CD4-positive, alpha-beta T cell (primary cell): ENCODE measurements at regions of chr2 and their contacts with region 1.

Region 1: GRCh38 chr2:10448208-10448645 is at the start of gene ODC1:
- DNase-seq: peak; percentile 96 to 99 (median 98)
- ATAC-seq: peak; percentile 81
- H3K4me3 ChIP-seq: peak within 1 kb of the TSS; percentile 63
- H3K4me3 Mint-ChIP-seq: peak within 1 kb of the TSS; percentile 86
- H3K27ac ChIP-seq: peak within 1 kb of the TSS; percentile 84 to 86
- H3K27ac Mint-ChIP-seq: peak within 1 kb of the TSS; percentile 87
- H3K4me1 ChIP-seq: peaks cover 47% of the 10 kb centered on the region
- H3K4me1 Mint-ChIP-seq: peaks cover 47% of the 10 kb centered on the region
- H3K27me3 ChIP-seq: no peaks in the 10 kb centered on the region
- H3K27me3 Mint-ChIP-seq: no peaks in the 10 kb centered on the region
- CTCF ChIP-seq: no peak
- total RNA-seq, gene ODC1: 162 to 164 TPM

Region 2: DNA sequence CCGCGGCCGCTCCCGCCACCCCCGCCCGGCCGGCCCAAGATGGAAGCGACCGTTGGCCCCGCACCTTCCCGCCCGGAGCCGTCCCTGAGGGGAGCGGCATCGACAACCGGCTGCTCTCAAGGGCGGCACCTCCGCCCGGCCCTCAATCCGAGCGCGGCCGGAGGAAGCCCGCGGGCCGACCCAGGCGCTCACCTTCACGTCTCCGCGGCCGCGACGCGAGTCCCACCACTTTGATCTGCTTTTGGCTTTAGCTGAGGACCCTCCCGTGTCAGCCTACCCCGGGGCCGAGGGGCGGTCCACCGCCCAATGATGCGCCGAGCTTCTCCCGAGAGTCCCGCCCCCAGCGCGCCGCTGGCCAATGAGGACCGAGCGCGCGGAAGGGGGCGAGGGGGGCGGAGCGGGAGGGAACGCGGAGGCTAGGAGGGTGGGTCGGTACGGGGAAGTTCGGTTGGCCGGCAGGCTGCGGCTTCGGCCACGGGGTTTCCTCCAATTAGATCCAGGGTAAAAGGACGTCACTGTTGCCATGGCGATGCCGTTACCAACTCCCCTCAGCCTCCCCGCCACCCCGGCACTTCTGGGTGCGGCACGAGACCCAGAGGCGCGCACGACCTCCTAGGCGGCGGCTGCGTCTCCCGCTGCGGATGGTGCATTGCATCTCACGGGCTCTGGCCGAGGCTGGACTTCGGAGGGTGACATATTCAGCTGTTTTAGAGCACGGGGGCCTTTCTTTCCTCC is 817.3 kb before region 1 on chr2 and contains the start of gene YWHAQ:
- CTCF ChIA-PET with region 1: no interaction called
- POLR2A ChIA-PET with region 1: no interaction called
- intact Hi-C with region 1: loop called in 1 of 2 experiments (anchors 5 kb)
- DNase-seq: peak; percentile 93 to 99 (median 96)
- ATAC-seq: peak; percentile 85
- H3K4me3 ChIP-seq: peak within 1 kb of the TSS; percentile 93
- H3K4me3 Mint-ChIP-seq: peak within 1 kb of the TSS; percentile 98
- H3K27ac ChIP-seq: peak within 1 kb of the TSS; percentile 77 to 81
- H3K27ac Mint-ChIP-seq: peak within 1 kb of the TSS; percentile 96
- H3K4me1 ChIP-seq: peaks cover 42% of the 10 kb centered on the region
- H3K4me1 Mint-ChIP-seq: peaks cover 56% of the 10 kb centered on the region
- H3K27me3 ChIP-seq: no peaks in the 10 kb centered on the region
- H3K27me3 Mint-ChIP-seq: no peaks in the 10 kb centered on the region
- CTCF ChIP-seq: no peak
- total RNA-seq, gene YWHAQ: 95.8 to 101 TPM

Region 3: GRCh38 chr2:9951272-9951972 is 496.8 kb before region 1 on chr2 and contains the start of gene GRHL1:
- CTCF ChIA-PET with region 1: no interaction called
- POLR2A ChIA-PET with region 1: no interaction called
- intact Hi-C with region 1: loop called in 1 of 2 experiments (anchors 10 kb)
- DNase-seq: peak; percentile 78 to 98 (median 88)
- ATAC-seq: peak; percentile 95
- H3K4me3 ChIP-seq: peak within 1 kb of the TSS; percentile 52
- H3K4me3 Mint-ChIP-seq: peak within 1 kb of the TSS; percentile 94
- H3K27ac ChIP-seq: no peak within 1 kb of the TSS
- H3K27ac Mint-ChIP-seq: peak within 1 kb of the TSS; percentile 39
- H3K4me1 ChIP-seq: peaks cover 10% of the 10 kb centered on the region
- H3K4me1 Mint-ChIP-seq: peaks cover 4% of the 10 kb centered on the region
- H3K27me3 ChIP-seq: peaks cover 11 to 21% of the 10 kb centered on the region in 2 experiments
- H3K27me3 Mint-ChIP-seq: peaks cover 56% of the 10 kb centered on the region
- CTCF ChIP-seq: no peak
- total RNA-seq, gene GRHL1: 0.28 to 0.38 TPM

Region 4: GRCh38 chr2:10019174-10019573 is 429.1 kb before region 1 on chr2:
- CTCF ChIA-PET with region 1: no interaction called
- POLR2A ChIA-PET with region 1: no interaction called
- intact Hi-C with region 1: no loop called
- DNase-seq: no peak
- ATAC-seq: no peak
- H3K4me3 ChIP-seq: no peak overlapping the region
- H3K4me3 Mint-ChIP-seq: no peak overlapping the region
- H3K27ac ChIP-seq: no peak overlapping the region
- H3K27ac Mint-ChIP-seq: no peak overlapping the region
- H3K4me1 ChIP-seq: no peaks in the 10 kb centered on the region
- H3K4me1 Mint-ChIP-seq: no peaks in the 10 kb centered on the region
- H3K27me3 ChIP-seq: no peaks in the 10 kb centered on the region
- H3K27me3 Mint-ChIP-seq: peaks cover 13% of the 10 kb centered on the region
- CTCF ChIP-seq: no peak

Region 5: DNA sequence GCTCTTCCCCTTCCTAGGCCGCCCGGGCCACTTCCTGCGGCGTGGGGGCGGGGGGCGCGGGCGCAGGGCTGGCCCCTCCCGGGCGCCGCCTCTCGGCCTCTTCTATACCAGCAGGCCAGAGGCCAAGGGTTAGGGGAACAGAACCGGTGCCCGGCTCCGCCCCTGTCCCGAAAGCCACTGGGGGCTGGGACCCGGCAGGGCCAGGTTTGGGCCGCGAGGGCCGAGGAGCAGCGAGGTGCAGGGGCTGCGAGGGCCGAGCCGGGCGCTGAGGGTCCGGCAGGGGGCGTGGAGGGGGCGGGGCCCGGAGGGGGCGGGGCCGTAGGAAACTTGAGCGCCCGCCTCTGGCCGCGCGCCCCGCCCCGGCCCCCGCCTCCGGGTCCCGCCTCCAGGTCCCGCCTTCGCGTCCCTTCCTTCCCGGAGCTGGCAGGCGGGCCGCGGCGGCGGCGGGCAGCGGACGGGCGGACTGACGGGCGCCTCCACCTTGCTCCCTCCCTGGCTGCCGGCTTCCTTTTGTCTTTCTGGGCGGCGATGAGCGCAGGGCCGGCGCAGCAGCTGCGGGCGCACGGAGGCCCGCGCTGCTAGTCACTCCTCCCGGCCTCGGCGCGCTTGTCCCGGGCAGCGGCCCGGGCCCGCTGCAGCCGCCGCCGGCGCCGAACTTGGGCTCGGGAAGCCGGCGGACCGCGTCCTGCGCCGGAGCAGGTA is 145.6 kb before region 1 on chr2 and contains the start of gene HPCAL1:
- CTCF ChIA-PET with region 1: no interaction called
- POLR2A ChIA-PET with region 1: interaction called, 47 read pairs
- intact Hi-C with region 1: loop called in 1 of 2 experiments (anchors 2 kb)
- DNase-seq: peak; percentile 60 to 91 (median 80)
- ATAC-seq: peak; percentile 62
- H3K4me3 ChIP-seq: peak within 1 kb of the TSS; percentile 92
- H3K4me3 Mint-ChIP-seq: peak within 1 kb of the TSS; percentile 98
- H3K27ac ChIP-seq: peak within 1 kb of the TSS; percentile 42 to 70
- H3K27ac Mint-ChIP-seq: peak within 1 kb of the TSS; percentile 84
- H3K4me1 ChIP-seq: peaks cover 65% of the 10 kb centered on the region
- H3K4me1 Mint-ChIP-seq: peaks cover 76% of the 10 kb centered on the region
- H3K27me3 ChIP-seq: no peaks in the 10 kb centered on the region
- H3K27me3 Mint-ChIP-seq: no peaks in the 10 kb centered on the region
- CTCF ChIP-seq: peak; percentile 76
- total RNA-seq, gene HPCAL1: 24.9 to 27.9 TPM

Region 6: DNA sequence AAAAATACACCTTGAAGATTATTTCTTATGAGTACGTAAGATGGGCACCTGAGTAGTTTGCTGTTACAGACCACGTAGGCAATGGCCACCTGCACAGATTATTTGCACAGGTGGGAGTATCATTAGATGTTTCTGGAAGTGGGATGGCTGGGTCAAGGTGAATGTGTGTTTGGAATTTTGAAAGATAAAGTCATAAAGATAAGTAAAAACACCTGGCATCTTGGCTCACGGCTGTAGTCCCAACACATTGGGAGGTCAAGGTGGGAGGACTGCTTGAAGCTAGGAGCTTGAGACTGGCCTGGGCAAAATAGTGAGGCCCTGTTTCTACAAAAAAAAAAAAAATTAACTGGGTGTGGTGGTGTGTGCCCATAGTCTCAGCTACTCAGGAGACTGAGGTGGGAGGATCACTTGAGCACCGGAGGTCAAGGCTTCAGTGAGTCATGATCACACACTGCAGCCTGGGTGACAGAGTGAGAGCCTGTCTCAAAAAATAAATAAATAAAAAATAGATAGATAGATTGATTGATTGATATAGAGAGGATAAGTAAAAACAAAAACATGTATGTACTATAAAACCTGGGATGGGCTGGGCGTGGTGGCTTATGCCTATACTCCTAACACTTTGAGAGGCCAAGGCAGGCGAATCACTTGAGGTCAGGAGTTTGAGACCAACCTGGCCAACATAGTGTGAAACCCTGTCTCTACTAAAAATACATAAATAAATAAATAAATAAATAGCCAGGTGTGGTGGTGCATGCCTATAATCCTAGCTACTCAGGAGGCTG is 30.5 kb before region 1 on chr2:
- CTCF ChIA-PET with region 1: no interaction called
- POLR2A ChIA-PET with region 1: no interaction called
- intact Hi-C with region 1: no loop called
- DNase-seq: no peak
- ATAC-seq: no peak
- H3K4me3 ChIP-seq: no peak overlapping the region
- H3K4me3 Mint-ChIP-seq: no peak overlapping the region
- H3K27ac ChIP-seq: no peak overlapping the region
- H3K27ac Mint-ChIP-seq: no peak overlapping the region
- H3K4me1 ChIP-seq: peaks cover 7% of the 10 kb centered on the region
- H3K4me1 Mint-ChIP-seq: no peaks in the 10 kb centered on the region
- H3K27me3 ChIP-seq: no peaks in the 10 kb centered on the region
- H3K27me3 Mint-ChIP-seq: no peaks in the 10 kb centered on the region
- CTCF ChIP-seq: no peak

Region 7: GRCh38 chr2:10434886-10435819 is 13.1 kb before region 1 on chr2:
- CTCF ChIA-PET with region 1: interaction called, 34 read pairs
- POLR2A ChIA-PET with region 1: interaction called, 44 read pairs
- intact Hi-C with region 1: no loop called
- DNase-seq: peak in 13 of 14 experiments; percentile 50 to 87 (median 65)
- ATAC-seq: peak; percentile 56
- H3K4me3 ChIP-seq: no peak overlapping the region
- H3K4me3 Mint-ChIP-seq: peak overlapping the region; percentile 64
- H3K27ac ChIP-seq: no peak overlapping the region
- H3K27ac Mint-ChIP-seq: no peak overlapping the region
- H3K4me1 ChIP-seq: peaks cover 23% of the 10 kb centered on the region
- H3K4me1 Mint-ChIP-seq: peaks cover 9% of the 10 kb centered on the region
- H3K27me3 ChIP-seq: peaks cover 0 to 6% of the 10 kb centered on the region in 2 experiments
- H3K27me3 Mint-ChIP-seq: no peaks in the 10 kb centered on the region
- CTCF ChIP-seq: peak; percentile 91

Region 8: GRCh38 chr2:10688921-10689807 is 240.9 kb after region 1 on chr2:
- CTCF ChIA-PET with region 1: no interaction called
- POLR2A ChIA-PET with region 1: interaction called, 10 read pairs
- intact Hi-C with region 1: no loop called
- DNase-seq: peak in 3 of 14 experiments; percentile 3 to 9 (median 7)
- ATAC-seq: peak; percentile 16
- H3K4me3 ChIP-seq: peak overlapping the region; percentile 91
- H3K4me3 Mint-ChIP-seq: no peak overlapping the region
- H3K27ac ChIP-seq: peak overlapping the region; percentile 88 to 89
- H3K27ac Mint-ChIP-seq: no peak overlapping the region
- H3K4me1 ChIP-seq: peaks cover 30% of the 10 kb centered on the region
- H3K4me1 Mint-ChIP-seq: peaks cover 12% of the 10 kb centered on the region
- H3K27me3 ChIP-seq: no peaks in the 10 kb centered on the region
- H3K27me3 Mint-ChIP-seq: no peaks in the 10 kb centered on the region
- CTCF ChIP-seq: no peak